Natural killer cell (primary cell): ENCODE measurements at regions of chr13 and their contacts with region 1.

Region 1: GRCh38 chr13:45417790-45418534 is at the start of gene SLC25A30:
- DNase-seq: peak; percentile 82 to 94
- ATAC-seq: peak; percentile 92 to 96 (median 93)
- H3K4me3 ChIP-seq: peak within 1 kb of the TSS; percentile 75
- H3K4me3 Mint-ChIP-seq: peak within 1 kb of the TSS; percentile 94
- H3K27ac ChIP-seq: peak within 1 kb of the TSS; percentile 86
- H3K27ac Mint-ChIP-seq: peak within 1 kb of the TSS; percentile 95 to 97
- H3K4me1 ChIP-seq: peaks cover 17% of the 10 kb centered on the region
- H3K4me1 Mint-ChIP-seq: peaks cover 23 to 25% of the 10 kb centered on the region in 2 donors
- H3K27me3 ChIP-seq: no peaks in the 10 kb centered on the region
- H3K27me3 Mint-ChIP-seq: no peaks in the 10 kb centered on the region
- CTCF ChIP-seq: no peak
- total RNA-seq, gene SLC25A30: 15.0 to 22.3 (median 22.0) TPM

Region 2: GRCh38 chr13:44917589-44918325 is 500.2 kb before region 1 on chr13:
- intact Hi-C with region 1: loop called (anchors 2 kb)
- DNase-seq: peak; percentile 98 to 100
- ATAC-seq: peak; percentile 71 to 88 (median 77)
- H3K4me3 ChIP-seq: peak overlapping the region; percentile 72
- H3K4me3 Mint-ChIP-seq: no peak overlapping the region
- H3K27ac ChIP-seq: peak overlapping the region; percentile 84
- H3K27ac Mint-ChIP-seq: no peak overlapping the region
- H3K4me1 ChIP-seq: peaks cover 18% of the 10 kb centered on the region
- H3K4me1 Mint-ChIP-seq: no peaks in the 10 kb centered on the region
- H3K27me3 ChIP-seq: no peaks in the 10 kb centered on the region
- H3K27me3 Mint-ChIP-seq: no peaks in the 10 kb centered on the region
- CTCF ChIP-seq: no peak

Region 3: DNA sequence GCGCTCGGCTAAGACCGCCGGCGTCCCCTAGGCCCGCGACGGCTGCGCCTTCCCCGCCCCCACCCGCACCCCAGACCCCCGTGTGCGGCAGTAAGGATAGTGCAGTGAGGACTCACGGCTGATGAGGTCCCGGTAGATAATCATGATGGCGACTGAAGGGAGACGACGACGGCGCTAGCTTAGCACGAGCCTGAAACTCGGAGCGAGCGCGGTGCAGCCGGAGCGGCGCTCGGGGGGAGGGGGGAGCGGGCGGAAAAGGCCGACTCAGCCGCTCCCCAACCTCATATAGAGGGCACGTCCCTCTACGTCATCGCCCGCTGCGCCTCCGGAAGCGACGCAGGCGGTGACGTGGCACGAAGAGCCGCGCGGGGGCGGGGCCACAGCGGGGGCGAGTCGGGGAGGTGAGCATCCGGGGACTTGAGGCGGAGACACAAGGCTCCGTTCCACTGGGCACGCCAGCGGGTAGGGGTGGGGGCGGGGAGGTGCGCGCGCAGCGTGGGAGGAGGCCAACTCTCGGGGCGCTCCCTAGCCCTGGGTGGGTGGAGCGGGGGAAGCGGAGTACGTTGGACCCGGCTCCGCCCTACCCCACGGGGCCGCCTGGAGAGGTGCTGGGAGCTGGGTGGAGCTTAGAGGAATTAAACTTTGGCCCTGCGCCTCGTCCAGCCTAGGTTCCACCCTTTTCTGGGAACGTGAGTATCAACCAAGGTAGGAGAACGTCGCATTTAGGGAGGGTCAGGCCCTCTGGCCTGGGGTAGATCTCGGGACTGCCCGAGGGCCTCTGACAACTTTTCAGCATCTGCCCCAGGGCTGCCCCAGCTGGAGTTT is 76.8 kb before region 1 on chr13 and contains the start of gene TPT1:
- intact Hi-C with region 1: loop called (anchors 1 kb)
- DNase-seq: peak; percentile 99 to 100
- ATAC-seq: peak; percentile 81 to 93 (median 84)
- H3K4me3 ChIP-seq: peak within 1 kb of the TSS; percentile 82
- H3K4me3 Mint-ChIP-seq: peak within 1 kb of the TSS; percentile 94
- H3K27ac ChIP-seq: peak within 1 kb of the TSS; percentile 95
- H3K27ac Mint-ChIP-seq: peak within 1 kb of the TSS; percentile 72 to 98
- H3K4me1 ChIP-seq: peaks cover 18% of the 10 kb centered on the region
- H3K4me1 Mint-ChIP-seq: peaks cover 47 to 56% of the 10 kb centered on the region in 2 donors
- H3K27me3 ChIP-seq: no peaks in the 10 kb centered on the region
- H3K27me3 Mint-ChIP-seq: no peaks in the 10 kb centered on the region
- CTCF ChIP-seq: no peak
- total RNA-seq, gene TPT1: 2,606 to 3,166 (median 3,085) TPM

Region 4: DNA sequence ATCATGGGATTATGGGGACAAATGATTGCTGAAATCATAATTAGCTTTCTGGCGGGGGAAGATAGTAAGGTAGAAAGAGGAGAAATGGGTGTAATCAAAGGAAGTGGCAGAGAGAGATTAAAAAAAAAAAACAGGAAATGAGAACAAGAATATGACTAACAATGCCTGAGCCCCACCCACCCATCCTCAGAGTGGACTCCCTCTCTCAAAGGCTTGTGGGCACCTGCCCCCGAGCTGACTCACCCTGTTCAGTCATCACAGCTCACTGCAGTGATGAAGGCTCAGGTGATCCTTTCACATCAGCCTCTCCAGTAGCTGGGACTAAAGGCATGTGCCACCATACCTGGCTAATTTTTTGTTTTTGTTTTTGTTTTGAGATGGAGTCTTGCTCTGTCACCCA is 50.6 kb before region 1 on chr13:
- intact Hi-C with region 1: loop called (anchors 10 kb)
- DNase-seq: peak; percentile 61 to 92
- ATAC-seq: peak; percentile 96 to 97 (median 96)
- H3K4me3 ChIP-seq: no peak overlapping the region
- H3K4me3 Mint-ChIP-seq: peak overlapping the region; percentile 75
- H3K27ac ChIP-seq: peak overlapping the region; percentile 36
- H3K27ac Mint-ChIP-seq: peak overlapping the region; percentile 60 to 73
- H3K4me1 ChIP-seq: peaks cover 34% of the 10 kb centered on the region
- H3K4me1 Mint-ChIP-seq: peaks cover 34 to 50% of the 10 kb centered on the region in 2 donors
- H3K27me3 ChIP-seq: no peaks in the 10 kb centered on the region
- H3K27me3 Mint-ChIP-seq: no peaks in the 10 kb centered on the region
- CTCF ChIP-seq: no peak

Region 5: DNA sequence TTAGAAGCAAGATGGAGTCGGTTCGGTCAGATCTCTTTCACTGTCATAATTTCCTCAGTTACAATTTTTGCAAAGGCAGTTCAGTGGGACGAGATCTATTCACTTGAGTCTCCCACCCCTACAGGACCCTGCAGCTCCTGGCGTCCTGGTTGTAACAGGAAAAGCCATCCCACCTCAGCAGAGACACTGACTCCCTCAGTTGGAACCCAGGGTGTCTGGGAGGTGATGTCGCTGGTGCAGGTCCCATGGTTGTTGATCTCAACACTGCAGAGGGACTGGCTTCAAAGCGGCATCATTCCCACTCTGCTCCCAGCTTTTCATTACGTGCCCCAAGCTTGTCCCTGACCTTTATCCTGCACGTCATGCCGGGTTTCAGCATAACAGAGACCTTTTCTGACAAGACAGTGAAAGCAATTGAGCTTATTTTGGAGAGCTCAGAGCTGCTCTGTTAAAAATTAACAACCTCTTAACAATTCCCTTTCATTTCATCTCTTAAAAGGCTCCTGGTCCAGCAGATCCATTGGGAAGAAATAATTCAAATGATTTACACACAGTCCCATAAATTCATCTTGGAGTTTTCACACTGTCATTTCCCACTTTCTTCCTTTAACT is 29.2 kb after region 1 on chr13:
- intact Hi-C with region 1: no loop called
- DNase-seq: no peak
- ATAC-seq: no peak
- H3K4me3 ChIP-seq: no peak overlapping the region
- H3K4me3 Mint-ChIP-seq: no peak overlapping the region
- H3K27ac ChIP-seq: no peak overlapping the region
- H3K27ac Mint-ChIP-seq: no peak overlapping the region
- H3K4me1 ChIP-seq: peaks cover 2% of the 10 kb centered on the region
- H3K4me1 Mint-ChIP-seq: peaks cover under 1 to 1% of the 10 kb centered on the region in 2 donors
- H3K27me3 ChIP-seq: no peaks in the 10 kb centered on the region
- H3K27me3 Mint-ChIP-seq: peaks cover 17 to 21% of the 10 kb centered on the region in 2 donors
- CTCF ChIP-seq: no peak

Region 6: GRCh38 chr13:45464687-45465453 is 46.9 kb after region 1 on chr13 and contains the start of gene COG3:
- intact Hi-C with region 1: loop called (anchors 1 kb)
- DNase-seq: peak; percentile 91 to 97
- ATAC-seq: peak; percentile 95 to 98 (median 95)
- H3K4me3 ChIP-seq: peak within 1 kb of the TSS; percentile 86
- H3K4me3 Mint-ChIP-seq: peak within 1 kb of the TSS; percentile 96
- H3K27ac ChIP-seq: peak within 1 kb of the TSS; percentile 87
- H3K27ac Mint-ChIP-seq: peak within 1 kb of the TSS; percentile 94 to 97
- H3K4me1 ChIP-seq: peaks cover 21% of the 10 kb centered on the region
- H3K4me1 Mint-ChIP-seq: peaks cover 42 to 52% of the 10 kb centered on the region in 2 donors
- H3K27me3 ChIP-seq: no peaks in the 10 kb centered on the region
- H3K27me3 Mint-ChIP-seq: peaks cover 7 to 11% of the 10 kb centered on the region in 2 donors
- CTCF ChIP-seq: peak; percentile 41
- total RNA-seq, gene COG3: 48.8 to 58.1 (median 55.6) TPM

Region 7: DNA sequence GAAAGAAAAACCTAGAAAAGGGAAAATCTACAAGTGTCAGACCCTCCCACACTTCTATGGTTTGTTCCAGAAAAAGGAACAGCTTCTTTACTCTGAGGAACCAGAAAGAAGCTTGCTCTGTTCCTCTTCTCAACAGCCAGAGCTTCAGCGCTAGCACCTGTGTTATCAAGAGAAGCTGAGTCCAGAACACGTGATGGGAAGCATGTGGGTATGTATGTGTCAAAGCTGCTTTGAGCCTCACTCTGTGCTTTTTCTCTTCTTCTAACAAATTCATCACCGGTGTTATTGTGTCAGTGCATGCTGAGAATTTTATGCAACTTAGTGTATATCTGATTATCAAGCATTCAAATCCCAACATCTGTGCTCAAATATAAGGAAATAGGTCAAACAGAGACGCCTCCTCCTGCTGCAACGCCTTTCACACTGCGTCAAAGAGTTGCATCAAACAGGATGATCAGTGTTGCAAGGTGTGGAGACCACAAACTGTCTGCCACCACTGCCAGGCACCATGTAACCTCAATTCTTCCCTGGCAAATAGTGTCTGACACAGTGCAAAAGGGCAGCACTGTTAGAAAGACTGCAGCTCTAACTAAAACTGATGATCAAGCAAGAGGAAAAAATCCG is 877.6 kb after region 1 on chr13:
- intact Hi-C with region 1: loop called (anchors 5 kb)
- DNase-seq: peak; percentile 68 to 92
- ATAC-seq: peak; percentile 80 to 94 (median 91)
- H3K4me3 ChIP-seq: no peak overlapping the region
- H3K4me3 Mint-ChIP-seq: peak overlapping the region; percentile 79
- H3K27ac ChIP-seq: peak overlapping the region; percentile 83
- H3K27ac Mint-ChIP-seq: peak overlapping the region; percentile 88 to 97
- H3K4me1 ChIP-seq: peaks cover 29% of the 10 kb centered on the region
- H3K4me1 Mint-ChIP-seq: peaks cover 39 to 40% of the 10 kb centered on the region in 2 donors
- H3K27me3 ChIP-seq: no peaks in the 10 kb centered on the region
- H3K27me3 Mint-ChIP-seq: no peaks in the 10 kb centered on the region
- CTCF ChIP-seq: no peak